Posterior vena cava (tissue), 2 donors: ENCODE measurements at regions of chr17 and their contacts with region 1.

Region 1: GRCh38 chr17:178292-179065 is 3.0 kb downstream of the DOC2B start:
- DNase-seq: no peak

Region 2: DNA sequence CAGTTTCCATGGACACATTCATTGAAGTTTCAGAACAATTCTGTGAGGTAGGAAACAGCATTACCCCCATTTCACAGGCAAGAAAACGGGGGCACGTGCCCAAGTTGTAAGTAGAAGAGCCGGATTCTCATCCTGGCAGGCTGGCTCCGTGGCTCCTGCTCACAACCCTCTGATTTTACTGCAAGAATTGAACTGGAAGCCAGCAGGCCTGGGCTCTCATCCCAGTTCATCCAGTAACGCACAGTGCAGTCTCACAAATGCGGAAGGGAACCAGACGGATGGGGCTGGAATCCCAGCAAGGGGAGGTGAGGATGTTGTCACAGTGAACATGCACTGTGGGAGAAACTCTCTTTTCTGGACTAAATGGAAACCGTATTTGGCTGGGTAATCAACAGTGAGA is 43.7 kb after region 1 on chr17:
- intact Hi-C with region 1: loop called in 1 of 2 experiments (anchors 1 kb)
- DNase-seq: peak; percentile 64